Heart right ventricle (tissue), 16 donors: ENCODE measurements at regions of chr17 and their contacts with region 1.

Region 1: DNA sequence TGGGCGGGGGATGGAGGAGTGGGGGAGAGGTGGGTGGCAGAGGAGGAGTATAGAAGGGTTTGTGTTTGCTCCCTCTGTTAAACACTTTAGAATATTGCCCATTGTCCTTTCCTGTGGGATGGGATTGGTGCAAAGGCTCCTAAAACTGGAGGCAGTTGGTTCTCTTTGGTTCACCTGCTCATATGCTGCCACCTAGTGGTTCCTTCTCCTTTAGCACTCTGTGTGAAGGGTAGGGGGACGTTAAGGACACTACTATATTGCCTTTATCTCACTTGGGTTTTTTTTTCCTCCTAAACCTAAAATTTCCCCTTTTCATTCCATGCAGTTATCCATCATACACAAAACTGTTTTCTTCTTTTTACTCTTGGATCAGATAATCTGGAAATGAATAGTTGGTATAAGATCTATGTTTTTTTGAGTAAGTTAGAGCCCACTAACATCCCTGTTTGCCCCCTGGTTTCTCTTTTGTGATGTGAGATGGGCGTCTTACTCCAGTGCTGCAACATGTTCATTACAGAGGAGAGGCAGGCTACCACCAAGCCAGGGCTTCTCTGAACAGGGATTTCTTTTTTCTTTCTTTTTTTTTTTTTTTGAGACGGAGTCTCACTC is 23.8 kb downstream of the SNX11 start:
- DNase-seq: peak in 1 of 2 donors; percentile 73
- ATAC-seq: peak; percentile 71 to 91 (median 84)
- H3K4me3 ChIP-seq: no peak overlapping the region
- H3K27ac ChIP-seq: peak overlapping the region in 1 of 10 donors; percentile 64
- H3K4me1 ChIP-seq: peaks cover 0 to 9% (median 0%) of the 10 kb centered on the region in 9 donors
- H3K27me3 ChIP-seq: peaks cover 0 to 3% (median 0%) of the 10 kb centered on the region in 7 donors
- CTCF ChIP-seq: peak; percentile 76 to 90 (median 84)

Region 2: DNA sequence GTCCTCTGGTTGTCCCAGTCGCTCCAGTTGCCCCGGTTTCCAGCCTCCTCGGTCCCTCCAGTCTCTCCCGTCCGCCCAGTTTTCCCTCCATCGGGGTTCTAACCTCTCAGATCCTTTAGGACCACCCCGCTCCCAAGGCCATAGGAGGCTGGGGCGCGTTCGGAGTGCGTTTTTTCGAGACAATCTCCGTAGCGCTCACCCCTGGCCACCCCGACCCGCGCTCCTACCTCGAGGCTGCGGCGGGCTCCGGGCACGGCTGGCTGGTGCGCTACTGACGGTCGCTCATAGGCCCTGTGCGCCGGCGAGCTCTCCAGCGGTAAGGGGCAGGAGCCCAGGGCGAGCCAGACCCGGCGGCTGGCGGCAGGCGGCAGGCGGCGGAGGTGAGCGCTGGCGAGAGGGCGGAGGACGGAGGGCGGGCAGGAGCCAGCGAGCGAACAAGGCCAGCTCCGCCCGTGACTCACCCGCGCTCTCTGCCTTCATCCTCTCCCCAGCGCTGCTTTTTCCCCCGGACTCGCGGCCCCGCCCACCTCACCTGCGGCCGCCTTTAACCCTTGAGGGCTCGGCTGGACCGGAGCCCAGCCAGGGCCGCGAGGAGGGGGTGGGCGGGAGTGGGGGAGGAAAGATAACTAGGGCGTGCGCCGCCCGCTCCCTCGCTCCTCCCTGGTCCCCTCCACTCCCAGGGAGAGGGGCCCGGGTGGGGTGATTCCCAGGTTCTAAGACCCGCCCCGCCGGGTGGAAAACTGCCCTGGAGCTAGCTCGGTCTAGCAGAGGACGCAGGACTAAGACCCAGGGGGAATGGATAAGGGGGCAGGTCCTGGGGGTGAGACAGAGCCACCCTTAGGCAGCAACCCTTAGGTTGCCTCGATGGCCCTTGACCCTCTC is 280.4 kb before region 1 on chr17 and contains the start of gene SP6:
- intact Hi-C with region 1: loop called in 1 of 10 experiments (anchors 5 kb)
- DNase-seq: peak; percentile 36 to 55
- ATAC-seq: peak; percentile 69 to 87 (median 80)
- H3K4me3 ChIP-seq: peak within 1 kb of the TSS; percentile 6 to 54 (median 45)
- H3K27ac ChIP-seq: peak within 1 kb of the TSS in 1 of 10 donors; percentile 68
- H3K4me1 ChIP-seq: peaks cover 5 to 45% (median 13%) of the 10 kb centered on the region in 9 donors
- H3K27me3 ChIP-seq: peaks cover 27 to 100% (median 91%) of the 10 kb centered on the region in 7 donors
- CTCF ChIP-seq: peak in 5 of 9 donors; percentile 13 to 52 (median 44)
- total RNA-seq, gene SP6: 0.05 to 0.51 (median 0.20) TPM

Region 3: DNA sequence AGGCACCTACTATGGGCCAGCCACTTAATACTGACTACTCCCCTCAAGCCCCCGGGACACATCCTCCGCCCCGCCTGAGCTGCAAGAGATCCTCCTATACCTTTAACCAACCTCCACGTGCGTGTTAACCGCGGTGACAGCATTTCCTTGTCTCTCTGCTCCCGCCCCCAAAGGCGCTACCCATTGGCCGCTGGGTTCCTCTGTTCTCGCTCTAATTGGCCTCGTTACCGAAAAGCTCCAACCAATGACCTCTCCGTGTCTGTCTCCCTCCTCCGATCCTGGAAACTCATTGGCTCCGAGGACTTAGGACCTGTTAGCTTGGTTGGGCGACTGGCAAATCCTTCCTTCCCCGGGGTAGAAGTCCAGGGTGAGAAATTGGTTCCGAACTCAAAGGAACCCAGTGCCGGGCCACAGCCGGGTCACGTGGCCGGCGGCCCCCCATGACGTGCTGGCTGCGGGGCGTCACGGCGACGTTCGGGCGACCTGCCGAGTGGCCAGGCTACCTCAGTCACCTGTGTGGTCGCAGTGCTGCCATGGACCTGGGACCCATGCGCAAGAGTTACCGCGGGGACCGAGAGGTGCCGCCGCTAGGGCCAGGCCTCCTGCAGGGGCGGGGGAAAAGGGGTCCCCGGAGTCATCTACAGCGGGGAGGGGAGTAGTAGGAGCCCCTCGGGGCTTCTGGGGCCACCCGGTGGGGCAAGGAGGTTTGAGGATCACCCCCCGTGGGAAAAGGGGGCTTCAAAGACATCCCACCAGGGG is 189.9 kb before region 1 on chr17 and contains the start of gene PNPO:
- intact Hi-C with region 1: loop called in 1 of 10 experiments (anchors 10 kb)
- DNase-seq: peak; percentile 87 to 96
- ATAC-seq: peak; percentile 96 to 99 (median 98)
- H3K4me3 ChIP-seq: peak within 1 kb of the TSS; percentile 63 to 99 (median 86)
- H3K27ac ChIP-seq: peak within 1 kb of the TSS in 9 of 10 donors; percentile 78 to 90 (median 84)
- H3K4me1 ChIP-seq: peaks cover 0 to 43% (median 30%) of the 10 kb centered on the region in 9 donors
- H3K27me3 ChIP-seq: no peaks in the 10 kb centered on the region
- CTCF ChIP-seq: peak in 2 of 9 donors; percentile 10 to 14
- total RNA-seq, gene PNPO: 22.8 to 37.0 (median 31.5) TPM

Region 4: GRCh38 chr17:48024937-48025906 is 106.1 kb before region 1 on chr17:
- intact Hi-C with region 1: loop called (anchors 1 to 5 kb)
- DNase-seq: peak; percentile 96 to 98
- ATAC-seq: peak; percentile 87 to 95 (median 92)
- H3K4me3 ChIP-seq: peak overlapping the region; percentile 27 to 60 (median 54)
- H3K27ac ChIP-seq: peak overlapping the region; percentile 32 to 89 (median 82)
- H3K4me1 ChIP-seq: peaks cover 18 to 51% (median 41%) of the 10 kb centered on the region in 9 donors
- H3K27me3 ChIP-seq: peaks cover 0 to 28% (median 16%) of the 10 kb centered on the region in 7 donors
- CTCF ChIP-seq: peak; percentile 53 to 88 (median 80)

Region 5: GRCh38 chr17:48084932-48085444 is 46.3 kb before region 1 on chr17:
- intact Hi-C with region 1: loop called in 2 of 10 experiments (anchors 2 to 5 kb)
- DNase-seq: no peak
- ATAC-seq: no peak
- H3K4me3 ChIP-seq: no peak overlapping the region
- H3K27ac ChIP-seq: no peak overlapping the region
- H3K4me1 ChIP-seq: peaks cover 0 to 22% (median 13%) of the 10 kb centered on the region in 9 donors
- H3K27me3 ChIP-seq: no peaks in the 10 kb centered on the region
- CTCF ChIP-seq: no peak

Region 6: DNA sequence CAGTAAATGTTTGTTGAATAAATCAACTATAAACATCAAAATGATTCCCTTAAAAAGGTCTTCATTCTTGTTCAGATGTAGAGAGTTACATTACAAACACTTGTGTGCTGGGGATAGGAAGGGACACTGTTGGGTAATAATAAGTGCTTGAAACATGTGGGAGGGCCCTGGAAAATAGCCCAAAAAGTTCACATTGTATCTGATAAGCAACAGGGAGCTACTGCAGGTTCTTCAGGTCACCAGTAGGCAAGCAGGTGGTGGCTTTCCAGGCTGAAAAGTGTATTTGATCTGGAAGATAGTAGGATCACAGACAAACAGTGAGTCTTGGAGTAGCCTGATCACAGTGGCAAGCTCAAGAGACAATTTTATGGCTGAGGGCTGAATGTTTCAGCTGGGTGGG is 1249.7 kb after region 1 on chr17:
- intact Hi-C with region 1: no loop called
- DNase-seq: no peak
- ATAC-seq: no peak
- H3K4me3 ChIP-seq: no peak overlapping the region
- H3K27ac ChIP-seq: no peak overlapping the region
- H3K4me1 ChIP-seq: no peaks in the 10 kb centered on the region
- H3K27me3 ChIP-seq: no peaks in the 10 kb centered on the region
- CTCF ChIP-seq: no peak